ENCODE measurements at regions of chr18 and their contacts with region 1.

Region 1: DNA sequence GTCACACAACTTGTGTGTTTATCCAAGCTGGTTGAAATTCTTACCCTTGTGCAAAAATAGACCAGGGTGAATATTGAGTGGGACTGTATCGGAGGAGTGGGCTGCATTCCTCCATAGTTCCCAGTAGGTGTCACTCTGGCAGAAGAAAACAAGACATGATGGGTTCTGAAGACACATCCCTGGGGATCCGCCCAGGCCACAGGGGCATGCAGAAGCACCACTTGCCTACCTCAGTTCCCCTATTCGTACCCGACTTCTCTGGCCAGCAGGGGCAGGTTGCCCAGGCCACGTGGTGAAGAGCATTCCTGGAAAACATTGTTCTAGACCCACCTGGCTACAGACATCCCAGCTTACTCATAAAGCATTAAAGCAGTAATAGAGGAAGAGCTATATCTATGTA is 168.2 kb downstream of the FAM210A start:
- DNase-seq: peak; percentile 48
- H3K4me3 Mint-ChIP-seq: no peak overlapping the region
- H3K27ac Mint-ChIP-seq: no peak overlapping the region
- H3K4me1 Mint-ChIP-seq: peaks cover 32% of the 10 kb centered on the region
- H3K27me3 Mint-ChIP-seq: no peaks in the 10 kb centered on the region

Region 2: DNA sequence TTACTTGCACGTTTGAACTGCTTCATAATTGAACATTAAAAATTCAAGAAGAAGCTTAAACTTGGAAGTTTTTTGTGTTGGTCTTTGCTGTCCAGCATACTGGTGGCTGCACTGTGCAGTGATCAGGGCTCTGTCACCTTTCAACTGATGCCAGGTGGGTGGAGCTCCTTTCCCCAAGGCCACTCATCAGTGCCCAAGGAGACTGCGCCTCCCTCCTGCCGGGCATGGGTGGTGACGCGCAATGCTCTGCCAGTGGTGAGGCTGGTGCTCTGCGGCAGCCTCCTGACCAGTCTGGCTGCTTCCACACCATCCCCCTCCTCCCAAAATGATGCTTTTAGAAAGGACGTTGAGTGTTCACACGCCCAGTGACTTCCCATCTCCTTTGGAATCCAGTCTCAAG is 355.5 kb before region 1 on chr18:
- CTCF ChIA-PET with region 1: no interaction called
- intact Hi-C with region 1: no loop called
- DNase-seq: no peak
- H3K4me3 Mint-ChIP-seq: no peak overlapping the region
- H3K27ac Mint-ChIP-seq: no peak overlapping the region
- H3K4me1 Mint-ChIP-seq: peaks cover 3% of the 10 kb centered on the region
- H3K27me3 Mint-ChIP-seq: peaks cover 22% of the 10 kb centered on the region

Region 3: GRCh38 chr18:13268158-13269012 is 289.7 kb before region 1 on chr18:
- CTCF ChIA-PET with region 1: no interaction called
- intact Hi-C with region 1: loop called (anchors 2 kb)
- DNase-seq: no peak
- H3K4me3 Mint-ChIP-seq: no peak overlapping the region
- H3K27ac Mint-ChIP-seq: no peak overlapping the region
- H3K4me1 Mint-ChIP-seq: peaks cover 71% of the 10 kb centered on the region
- H3K27me3 Mint-ChIP-seq: no peaks in the 10 kb centered on the region

Region 4: GRCh38 chr18:13577091-13577697 is 19.1 kb after region 1 on chr18:
- CTCF ChIA-PET with region 1: interaction called, 5 read pairs
- intact Hi-C with region 1: loop called (anchors 1 kb)
- DNase-seq: peak; percentile 71
- H3K4me3 Mint-ChIP-seq: peak overlapping the region; percentile 5
- H3K27ac Mint-ChIP-seq: peak overlapping the region; percentile 55
- H3K4me1 Mint-ChIP-seq: peaks cover 36% of the 10 kb centered on the region
- H3K27me3 Mint-ChIP-seq: no peaks in the 10 kb centered on the region

Region 5: DNA sequence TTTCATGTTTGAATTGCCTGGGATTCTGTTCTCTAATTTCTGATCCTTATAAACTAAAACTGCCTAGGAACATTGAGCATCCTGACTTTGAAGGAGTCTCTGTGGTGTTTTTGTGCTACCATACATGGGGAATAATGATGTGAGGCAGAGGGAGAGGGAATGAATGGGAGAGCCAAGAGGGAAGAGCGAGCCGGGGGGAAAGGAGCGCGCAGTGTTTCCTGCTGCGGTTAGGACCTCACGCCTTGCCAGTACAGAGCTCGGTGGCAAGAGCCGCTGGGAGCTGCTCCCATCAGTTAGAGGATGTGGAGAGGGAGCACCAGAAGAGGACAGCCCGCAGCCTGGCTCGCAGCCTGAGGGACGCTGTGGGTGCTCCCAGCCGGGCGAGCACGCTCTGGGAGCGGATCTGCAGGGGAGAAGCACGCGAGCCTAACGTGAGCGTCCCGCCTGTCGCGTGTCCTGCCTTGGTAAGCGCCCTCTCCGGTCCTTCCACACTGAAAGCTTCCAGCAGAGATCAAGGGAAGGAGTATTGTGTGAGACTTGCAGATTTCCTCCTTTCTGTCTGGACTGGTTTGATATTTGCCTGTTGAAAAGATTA is 53.6 kb after region 1 on chr18:
- CTCF ChIA-PET with region 1: interaction called, 16 read pairs
- intact Hi-C with region 1: loop called (anchors 1 kb)
- DNase-seq: peak; percentile 26
- H3K4me3 Mint-ChIP-seq: peak overlapping the region; percentile 71
- H3K27ac Mint-ChIP-seq: no peak overlapping the region
- H3K4me1 Mint-ChIP-seq: peaks cover 74% of the 10 kb centered on the region
- H3K27me3 Mint-ChIP-seq: no peaks in the 10 kb centered on the region

Region 6: GRCh38 chr18:13726232-13726971 is 168.3 kb after region 1 on chr18 and contains the starts of genes FAM210A and RNMT:
- CTCF ChIA-PET with region 1: interaction called, 6 read pairs
- intact Hi-C with region 1: loop called (anchors 1 kb)
- DNase-seq: peak; percentile 96
- H3K4me3 Mint-ChIP-seq: peak within 1 kb of the TSS; percentile 91
- H3K27ac Mint-ChIP-seq: peak within 1 kb of the TSS; percentile 89
- H3K4me1 Mint-ChIP-seq: peaks cover 46% of the 10 kb centered on the region
- H3K27me3 Mint-ChIP-seq: no peaks in the 10 kb centered on the region
- total RNA-seq, gene FAM210A: 18.6 to 20.2 TPM
- total RNA-seq, gene RNMT: 25.2 to 27.4 TPM

Region 7: DNA sequence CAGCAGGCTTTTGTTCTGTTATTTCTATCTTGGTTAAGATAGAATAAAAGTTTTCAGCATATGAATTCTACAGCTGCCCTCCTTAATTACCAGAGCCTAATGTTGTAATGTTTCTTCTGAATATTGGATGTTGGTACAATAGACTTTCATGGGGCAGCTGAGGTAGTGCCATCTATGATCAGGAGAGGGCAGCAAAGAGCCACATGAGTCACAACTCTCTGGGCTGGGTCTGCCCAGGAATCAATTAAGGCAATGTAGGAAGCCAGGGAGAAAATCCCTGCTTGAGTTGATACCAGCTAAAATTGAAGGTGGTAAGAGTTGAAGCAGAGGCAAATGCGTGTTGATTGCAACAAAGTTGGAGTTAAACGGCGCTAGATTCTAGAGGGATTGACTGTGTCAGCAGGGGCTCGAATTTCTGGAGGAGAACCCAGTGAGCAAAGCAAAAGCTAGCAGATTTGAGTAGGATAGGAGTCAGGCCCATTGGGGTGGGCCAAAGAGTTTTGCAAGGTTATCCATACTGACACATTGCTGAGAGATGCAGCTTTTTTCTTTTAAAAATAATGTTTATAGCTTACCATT is 255.2 kb after region 1 on chr18:
- CTCF ChIA-PET with region 1: interaction called, 18 read pairs
- intact Hi-C with region 1: no loop called
- DNase-seq: peak; percentile 75
- H3K4me3 Mint-ChIP-seq: no peak overlapping the region
- H3K27ac Mint-ChIP-seq: no peak overlapping the region
- H3K4me1 Mint-ChIP-seq: no peaks in the 10 kb centered on the region
- H3K27me3 Mint-ChIP-seq: no peaks in the 10 kb centered on the region

Region 8: GRCh38 chr18:13989199-13989598 is 431.1 kb after region 1 on chr18:
- CTCF ChIA-PET with region 1: no interaction called
- intact Hi-C with region 1: no loop called
- DNase-seq: no peak
- H3K4me3 Mint-ChIP-seq: no peak overlapping the region
- H3K27ac Mint-ChIP-seq: no peak overlapping the region
- H3K4me1 Mint-ChIP-seq: no peaks in the 10 kb centered on the region
- H3K27me3 Mint-ChIP-seq: peaks cover 4% of the 10 kb centered on the region

Measured in activated naive CD4-positive, alpha-beta T cell treated with anti-CD3 and anti-CD28 coated beads for 36 hours (primary cell).